Breast epithelium (tissue), 4 donors: ENCODE measurements at regions of chr3 and their contacts with region 1.

Region 1: GRCh38 chr3:184354121-184354728 is 7.2 kb downstream of the CLCN2 start:
- DNase-seq: no peak
- H3K4me3 ChIP-seq: peak overlapping the region in 1 of 3 donors; percentile 15
- H3K27ac ChIP-seq: no peak overlapping the region
- H3K4me1 ChIP-seq: no peaks in the 10 kb centered on the region
- H3K27me3 ChIP-seq: no peaks in the 10 kb centered on the region
- CTCF ChIP-seq: peak in 2 of 3 donors; percentile 46
- POLR2A ChIP-seq: no peak

Region 2: GRCh38 chr3:183172051-183172639 is 1182.1 kb before region 1 on chr3:
- intact Hi-C with region 1: no loop called
- DNase-seq: no peak
- H3K4me3 ChIP-seq: no peak overlapping the region
- H3K27ac ChIP-seq: no peak overlapping the region
- H3K4me1 ChIP-seq: no peaks in the 10 kb centered on the region
- H3K27me3 ChIP-seq: peaks cover 0 to 15% of the 10 kb centered on the region in 2 donors
- CTCF ChIP-seq: no peak
- POLR2A ChIP-seq: no peak

Region 3: GRCh38 chr3:184005941-184006507 is 348.2 kb before region 1 on chr3:
- intact Hi-C with region 1: no loop called
- DNase-seq: peak; percentile 52 to 62
- H3K4me3 ChIP-seq: peak overlapping the region in 2 of 3 donors; percentile 25 to 27
- H3K27ac ChIP-seq: peak overlapping the region in 1 of 2 donors; percentile 18
- H3K4me1 ChIP-seq: no peaks in the 10 kb centered on the region
- H3K27me3 ChIP-seq: no peaks in the 10 kb centered on the region
- CTCF ChIP-seq: no peak
- POLR2A ChIP-seq: no peak

Region 4: GRCh38 chr3:184040010-184040409 is 314.2 kb before region 1 on chr3:
- intact Hi-C with region 1: no loop called
- DNase-seq: no peak
- H3K4me3 ChIP-seq: no peak overlapping the region
- H3K27ac ChIP-seq: no peak overlapping the region
- H3K4me1 ChIP-seq: no peaks in the 10 kb centered on the region
- H3K27me3 ChIP-seq: no peaks in the 10 kb centered on the region
- CTCF ChIP-seq: no peak
- POLR2A ChIP-seq: no peak

Region 5: GRCh38 chr3:184335661-184336546 is 18.3 kb before region 1 on chr3:
- intact Hi-C with region 1: no loop called
- DNase-seq: peak; percentile 76 to 85
- H3K4me3 ChIP-seq: peak overlapping the region; percentile 83 to 87 (median 84)
- H3K27ac ChIP-seq: peak overlapping the region; percentile 98
- H3K4me1 ChIP-seq: peaks cover 8 to 11% of the 10 kb centered on the region in 2 donors
- H3K27me3 ChIP-seq: no peaks in the 10 kb centered on the region
- CTCF ChIP-seq: no peak
- POLR2A ChIP-seq: peak; percentile 55

Region 6: DNA sequence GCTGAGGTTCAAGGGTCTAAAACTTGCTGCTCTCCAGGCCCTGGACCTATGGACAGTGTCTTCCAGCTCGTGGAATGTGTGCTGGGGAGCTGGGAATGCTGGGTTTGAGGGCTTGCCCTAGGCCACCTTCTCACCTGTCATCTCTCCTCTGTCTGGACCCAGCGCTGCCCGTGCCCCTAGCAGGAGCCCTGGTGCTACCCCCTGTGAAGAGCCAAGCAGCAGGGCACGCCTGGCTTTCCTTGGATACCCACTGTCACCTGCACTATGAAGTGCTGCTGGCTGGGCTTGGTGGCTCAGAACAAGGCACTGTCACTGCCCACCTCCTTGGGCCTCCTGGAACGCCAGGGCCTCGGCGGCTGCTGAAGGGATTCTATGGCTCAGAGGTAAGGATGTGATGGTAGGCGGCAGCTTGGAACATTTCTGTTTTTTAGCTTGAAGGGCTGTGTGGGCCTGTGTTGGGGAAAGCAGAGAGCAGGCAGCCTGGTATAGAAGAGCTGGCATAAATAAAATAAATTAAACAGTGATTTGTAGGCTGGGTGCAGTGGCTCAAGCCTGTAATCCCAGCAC is 30.7 kb after region 1 on chr3:
- intact Hi-C with region 1: loop called (anchors 1 kb)
- DNase-seq: no peak
- H3K4me3 ChIP-seq: no peak overlapping the region
- H3K27ac ChIP-seq: no peak overlapping the region
- H3K4me1 ChIP-seq: no peaks in the 10 kb centered on the region
- H3K27me3 ChIP-seq: no peaks in the 10 kb centered on the region
- CTCF ChIP-seq: no peak
- POLR2A ChIP-seq: no peak

Region 7: DNA sequence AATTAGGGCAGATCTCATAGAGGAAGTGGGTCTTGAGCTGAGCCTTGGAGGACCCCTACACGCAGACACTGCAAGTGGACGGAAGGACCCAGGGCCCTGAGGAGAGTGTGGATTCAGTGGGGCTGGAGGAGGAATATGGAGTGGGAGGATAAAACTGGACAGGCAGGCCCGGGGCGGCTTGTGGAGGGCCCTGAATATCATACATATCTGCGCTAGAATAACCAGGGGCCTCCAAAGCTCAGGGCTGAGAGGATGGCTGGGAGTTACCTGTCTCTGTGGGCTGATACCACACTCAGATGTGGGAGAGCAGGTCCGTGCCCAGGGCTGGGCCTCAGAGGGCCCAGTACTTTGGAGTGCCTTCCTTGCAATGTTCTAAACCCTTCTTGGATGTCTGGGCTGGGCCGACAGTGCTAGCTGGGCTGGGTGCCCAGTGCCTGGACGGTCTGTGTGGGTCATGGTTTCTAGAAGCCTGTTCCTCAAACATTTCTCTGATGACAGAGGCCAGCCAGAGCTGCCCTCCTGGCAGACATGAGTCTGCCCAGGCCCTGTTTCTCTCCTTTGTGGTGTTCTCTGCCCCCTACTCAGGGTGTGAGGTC is 55.2 kb after region 1 on chr3:
- intact Hi-C with region 1: loop called (anchors 2 kb)
- DNase-seq: no peak
- H3K4me3 ChIP-seq: no peak overlapping the region
- H3K27ac ChIP-seq: no peak overlapping the region
- H3K4me1 ChIP-seq: no peaks in the 10 kb centered on the region
- H3K27me3 ChIP-seq: no peaks in the 10 kb centered on the region
- CTCF ChIP-seq: no peak
- POLR2A ChIP-seq: no peak